CD4-positive, alpha-beta T cell (primary cell): ENCODE measurements at regions of chr21 and their contacts with region 1.

Region 1: DNA sequence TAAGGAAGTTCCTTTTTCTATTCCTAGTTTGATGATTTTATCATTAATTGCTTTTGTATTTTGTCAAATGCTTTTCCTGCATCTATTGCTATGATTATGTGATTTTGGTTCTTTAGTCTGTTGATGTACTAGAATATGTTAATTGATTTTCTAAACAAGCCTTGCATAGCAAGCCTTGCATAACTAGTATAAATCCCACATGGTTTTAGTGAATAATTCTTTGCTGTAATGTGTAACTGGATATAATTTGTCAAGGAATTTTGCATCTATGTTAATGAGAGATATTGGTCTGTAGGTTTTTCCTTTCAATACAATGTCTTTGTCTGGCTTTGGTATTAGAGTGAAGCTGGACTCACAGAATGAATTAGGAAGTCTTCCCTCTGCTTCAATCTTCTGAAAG is 460.2 kb downstream of the LTN1 start:
- DNase-seq: no peak
- ATAC-seq: no peak
- H3K4me3 ChIP-seq: no peak overlapping the region
- H3K4me3 Mint-ChIP-seq: no peak overlapping the region
- H3K27ac ChIP-seq: no peak overlapping the region
- H3K27ac Mint-ChIP-seq: no peak overlapping the region
- H3K4me1 ChIP-seq: no peaks in the 10 kb centered on the region
- H3K4me1 Mint-ChIP-seq: no peaks in the 10 kb centered on the region
- H3K27me3 ChIP-seq: peaks cover 0 to 12% of the 10 kb centered on the region in 2 experiments
- H3K27me3 Mint-ChIP-seq: peaks cover 38% of the 10 kb centered on the region
- CTCF ChIP-seq: no peak

Region 2: DNA sequence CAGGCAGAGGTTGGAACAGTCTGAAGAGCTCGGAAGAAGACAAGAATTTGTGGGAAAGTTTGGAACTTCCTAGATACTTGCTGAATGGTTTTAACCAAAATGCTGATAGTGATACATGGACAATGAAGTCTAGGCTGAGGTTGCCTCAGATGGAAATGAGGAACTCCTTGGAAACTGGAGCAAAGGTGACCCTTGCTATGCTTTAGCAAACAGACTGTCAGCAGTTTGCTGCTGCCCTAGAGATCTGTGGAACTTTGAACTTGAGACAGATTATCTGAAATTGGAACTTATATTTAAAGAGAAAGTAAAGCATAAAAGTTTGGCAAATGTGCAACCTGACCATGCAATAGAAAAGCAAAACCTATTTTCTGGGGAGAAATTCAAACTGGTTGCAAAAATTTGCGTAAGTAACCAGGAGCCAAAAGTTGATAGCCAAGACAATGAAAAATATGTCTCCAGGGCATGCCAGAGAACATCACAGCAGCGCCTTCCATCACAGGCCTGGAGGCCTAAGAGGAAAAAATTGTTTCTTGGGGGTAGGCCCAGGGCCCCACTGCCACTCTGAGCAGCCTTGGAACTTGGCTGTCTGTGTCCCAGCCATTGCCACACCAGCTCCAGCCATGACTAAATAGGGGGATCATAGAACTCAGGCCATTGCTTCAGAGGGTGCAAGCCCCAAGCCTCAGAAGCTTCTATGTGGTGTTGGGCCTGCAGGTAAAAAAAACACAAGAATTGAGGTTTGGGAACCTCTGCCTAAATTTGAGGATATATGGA is 215.1 kb before region 1 on chr21:
- CTCF ChIA-PET with region 1: no interaction called
- POLR2A ChIA-PET with region 1: no interaction called
- intact Hi-C with region 1: no loop called
- DNase-seq: no peak
- ATAC-seq: no peak
- H3K4me3 ChIP-seq: no peak overlapping the region
- H3K4me3 Mint-ChIP-seq: no peak overlapping the region
- H3K27ac ChIP-seq: no peak overlapping the region
- H3K27ac Mint-ChIP-seq: no peak overlapping the region
- H3K4me1 ChIP-seq: no peaks in the 10 kb centered on the region
- H3K4me1 Mint-ChIP-seq: no peaks in the 10 kb centered on the region
- H3K27me3 ChIP-seq: no peaks in the 10 kb centered on the region
- H3K27me3 Mint-ChIP-seq: no peaks in the 10 kb centered on the region
- CTCF ChIP-seq: no peak

Region 3: GRCh38 chr21:28509031-28509430 is 23.4 kb before region 1 on chr21:
- CTCF ChIA-PET with region 1: no interaction called
- POLR2A ChIA-PET with region 1: no interaction called
- intact Hi-C with region 1: loop called in 1 of 2 experiments (anchors 2 kb)
- DNase-seq: no peak
- ATAC-seq: no peak
- H3K4me3 ChIP-seq: no peak overlapping the region
- H3K4me3 Mint-ChIP-seq: no peak overlapping the region
- H3K27ac ChIP-seq: no peak overlapping the region
- H3K27ac Mint-ChIP-seq: no peak overlapping the region
- H3K4me1 ChIP-seq: no peaks in the 10 kb centered on the region
- H3K4me1 Mint-ChIP-seq: no peaks in the 10 kb centered on the region
- H3K27me3 ChIP-seq: no peaks in the 10 kb centered on the region
- H3K27me3 Mint-ChIP-seq: no peaks in the 10 kb centered on the region
- CTCF ChIP-seq: no peak

Region 4: GRCh38 chr21:28714777-28715464 is 182.5 kb after region 1 on chr21:
- CTCF ChIA-PET with region 1: no interaction called
- POLR2A ChIA-PET with region 1: no interaction called
- intact Hi-C with region 1: no loop called
- DNase-seq: no peak
- ATAC-seq: no peak
- H3K4me3 ChIP-seq: no peak overlapping the region
- H3K4me3 Mint-ChIP-seq: no peak overlapping the region
- H3K27ac ChIP-seq: no peak overlapping the region
- H3K27ac Mint-ChIP-seq: no peak overlapping the region
- H3K4me1 ChIP-seq: no peaks in the 10 kb centered on the region
- H3K4me1 Mint-ChIP-seq: no peaks in the 10 kb centered on the region
- H3K27me3 ChIP-seq: no peaks in the 10 kb centered on the region
- H3K27me3 Mint-ChIP-seq: no peaks in the 10 kb centered on the region
- CTCF ChIP-seq: no peak